ENCODE measurements at regions of chr16 and their contacts with region 1.

Region 1: DNA sequence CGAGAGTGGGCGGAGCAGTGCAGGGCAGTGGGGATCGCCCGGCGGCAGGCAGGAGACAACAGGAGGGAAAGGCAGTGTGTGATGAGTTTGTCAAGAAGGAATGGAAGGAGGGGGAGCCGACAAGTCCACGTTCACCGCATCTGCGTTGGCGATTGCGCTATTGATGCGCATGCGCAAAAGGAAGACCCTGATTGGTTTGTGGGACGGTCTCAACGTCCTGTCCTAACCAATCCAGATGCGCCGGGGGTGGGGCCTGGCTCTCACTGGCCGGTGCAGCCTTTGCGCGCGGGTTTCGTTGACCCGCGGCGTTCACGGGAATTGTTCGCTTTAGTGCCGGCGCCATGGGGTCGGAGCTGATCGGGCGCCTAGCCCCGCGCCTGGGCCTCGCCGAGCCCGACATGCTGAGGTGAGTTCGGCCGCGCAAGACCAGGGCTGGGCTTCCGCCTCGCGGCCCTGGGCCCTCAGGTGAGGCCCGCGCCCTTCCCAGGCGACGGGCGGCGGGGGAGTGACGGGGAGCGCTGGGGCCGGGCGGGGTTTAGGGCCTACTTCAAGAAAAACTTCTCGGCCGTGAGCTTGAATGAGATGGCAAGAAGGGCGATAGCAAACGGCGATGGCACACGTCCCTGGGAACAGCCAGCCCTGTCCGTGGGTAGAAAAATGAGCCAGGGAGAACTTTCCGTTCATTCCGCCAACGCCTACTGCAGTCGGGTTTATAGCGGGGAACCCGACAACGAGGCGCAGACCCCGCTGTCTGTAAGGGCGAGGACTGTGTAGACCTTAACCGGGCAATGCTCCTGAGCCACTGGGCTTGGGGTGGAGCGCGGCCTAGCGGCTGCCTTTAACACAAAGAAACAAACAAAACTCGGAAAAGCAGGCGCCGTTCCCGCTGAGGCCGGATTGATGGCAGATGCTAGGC is at the start of gene ORC6:
- DNase-seq: peak; percentile 96 to 98 (median 98)
- H3K4me3 ChIP-seq: peak within 1 kb of the TSS; percentile 60
- H3K27ac ChIP-seq: peak within 1 kb of the TSS; percentile 94
- H3K4me1 ChIP-seq: peaks cover 6% of the 10 kb centered on the region
- H3K27me3 ChIP-seq: no peaks in the 10 kb centered on the region
- CTCF ChIP-seq: peak in 1 of 3 donors; percentile 17
- EP300 ChIP-seq: no peak
- POLR2A ChIP-seq: no peak
- total RNA-seq, gene ORC6: 0.50 to 2.2 (median 1.6) TPM

Region 2: GRCh38 chr16:46774743-46775177 is 85.1 kb after region 1 on chr16:
- intact Hi-C with region 1: no loop called
- DNase-seq: no peak
- H3K4me3 ChIP-seq: no peak overlapping the region
- H3K27ac ChIP-seq: no peak overlapping the region
- H3K4me1 ChIP-seq: no peaks in the 10 kb centered on the region
- H3K27me3 ChIP-seq: no peaks in the 10 kb centered on the region
- CTCF ChIP-seq: no peak
- EP300 ChIP-seq: no peak
- POLR2A ChIP-seq: no peak

Region 3: DNA sequence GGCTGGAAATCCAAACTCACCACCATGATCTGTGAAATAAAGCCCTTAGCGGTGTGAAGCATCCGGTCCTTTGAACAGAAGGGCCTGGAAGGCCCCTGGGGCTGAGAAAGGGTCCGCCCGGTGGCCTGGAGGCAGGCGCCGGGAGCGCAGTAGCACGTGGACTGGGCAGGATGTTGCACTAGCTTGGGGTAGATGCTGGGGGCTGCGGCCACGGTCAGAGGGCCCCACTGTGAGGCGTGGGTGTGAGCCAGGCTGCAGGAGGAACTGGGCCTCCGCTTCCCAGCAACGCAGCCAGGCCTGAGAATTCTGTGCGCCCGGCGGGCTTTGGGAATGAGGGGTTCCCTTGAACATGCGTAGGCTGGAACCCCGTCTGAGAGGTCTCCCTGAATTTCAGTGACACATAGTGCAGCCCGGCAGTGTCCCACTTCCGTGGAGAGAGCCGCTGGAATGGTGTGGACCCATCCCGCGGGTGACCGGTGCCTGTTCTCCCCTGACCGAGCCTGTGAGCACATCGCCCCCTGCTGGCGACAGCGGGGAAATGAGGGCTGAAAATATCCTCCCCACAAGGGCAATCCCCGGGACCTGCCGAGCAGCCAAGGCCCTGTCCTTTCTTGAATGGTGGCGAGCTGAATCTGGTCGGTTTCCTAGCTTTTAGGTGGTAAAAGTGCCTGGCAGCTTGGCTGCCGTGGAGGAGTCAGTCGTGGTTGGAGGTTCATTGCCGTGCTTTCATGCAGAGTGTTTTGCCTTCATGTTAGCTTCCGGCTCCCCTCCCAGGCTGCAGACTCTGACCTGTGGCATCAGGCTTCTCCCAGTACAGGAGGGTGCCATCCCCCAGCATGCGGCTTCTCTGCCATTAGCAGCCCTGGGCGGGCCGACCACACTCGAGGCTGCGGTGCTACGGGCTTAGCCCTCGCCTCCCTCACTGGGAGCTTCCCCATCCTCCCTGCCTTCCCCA is 240.0 kb after region 1 on chr16:
- intact Hi-C with region 1: loop called in 1 of 4 experiments (anchors 10 kb)
- DNase-seq: peak; percentile 36 to 82 (median 57)
- H3K4me3 ChIP-seq: no peak overlapping the region
- H3K27ac ChIP-seq: no peak overlapping the region
- H3K4me1 ChIP-seq: no peaks in the 10 kb centered on the region
- H3K27me3 ChIP-seq: no peaks in the 10 kb centered on the region
- CTCF ChIP-seq: peak; percentile 36 to 50 (median 43)
- EP300 ChIP-seq: no peak
- POLR2A ChIP-seq: no peak

Region 4: GRCh38 chr16:46973207-46973995 is 283.8 kb after region 1 on chr16 and contains the start of gene DNAJA2:
- intact Hi-C with region 1: loop called in 1 of 4 experiments (anchors 5 kb)
- DNase-seq: peak; percentile 92 to 97 (median 95)
- H3K4me3 ChIP-seq: peak within 1 kb of the TSS; percentile 76
- H3K27ac ChIP-seq: peak within 1 kb of the TSS; percentile 88 to 94
- H3K4me1 ChIP-seq: peaks cover 5% of the 10 kb centered on the region
- H3K27me3 ChIP-seq: no peaks in the 10 kb centered on the region
- CTCF ChIP-seq: peak in 1 of 3 donors; percentile 11
- EP300 ChIP-seq: no peak
- POLR2A ChIP-seq: peak; percentile 94
- total RNA-seq, gene DNAJA2: 33.4 to 59.6 (median 58.4) TPM

Measured in ovary (tissue), 10 donors.